Posterior vena cava (tissue), 2 donors: ENCODE measurements at regions of chr19 and their contacts with region 1.

Region 1: DNA sequence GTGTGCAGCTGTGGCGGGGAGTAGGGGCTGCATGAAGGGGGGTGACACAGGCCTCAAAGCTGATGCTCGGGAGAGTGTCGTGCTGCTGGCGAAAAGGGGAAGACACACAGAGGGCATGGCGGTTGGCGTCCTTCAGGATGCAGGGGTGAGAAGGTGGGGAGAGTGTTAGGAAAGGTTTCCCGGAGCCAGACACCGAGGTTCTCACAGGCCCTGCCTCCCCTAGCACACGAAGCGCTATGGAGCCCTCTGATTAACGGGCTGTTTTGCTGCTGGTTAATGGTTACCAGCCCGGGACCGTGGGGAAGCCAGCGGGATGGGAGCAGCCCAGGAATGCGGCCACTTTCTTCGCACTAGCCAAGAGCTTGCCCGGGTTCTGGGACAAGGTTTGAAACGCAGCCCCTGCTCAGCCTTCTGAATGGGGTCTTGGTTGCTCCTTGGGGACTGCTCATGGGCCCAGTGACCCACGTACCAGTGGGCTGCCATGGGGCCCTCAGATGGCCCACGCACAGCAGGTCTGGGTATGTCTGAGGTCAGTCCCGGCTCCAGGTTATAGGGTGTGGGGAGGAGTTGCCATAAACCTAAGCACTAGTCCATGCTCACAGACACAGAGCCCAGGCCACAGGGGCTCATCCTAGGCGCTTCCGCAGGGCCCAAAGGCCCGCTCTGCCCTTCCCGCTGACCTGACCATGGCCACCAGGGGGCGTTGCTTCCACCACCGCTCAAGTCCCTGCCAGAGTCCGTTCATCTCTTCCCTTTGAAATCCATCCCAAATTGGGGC is 31.3 kb upstream of the ISYNA1 start:
- DNase-seq: peak; percentile 92

Region 2: GRCh38 chr19:18507021-18507726 is 37.9 kb after region 1 on chr19:
- intact Hi-C with region 1: loop called in 1 of 2 experiments (anchors 5 kb)
- DNase-seq: no peak

Region 3: GRCh38 chr19:18519962-18520847 is 50.9 kb after region 1 on chr19:
- intact Hi-C with region 1: loop called in 1 of 2 experiments (anchors 5 kb)
- DNase-seq: no peak

Region 4: DNA sequence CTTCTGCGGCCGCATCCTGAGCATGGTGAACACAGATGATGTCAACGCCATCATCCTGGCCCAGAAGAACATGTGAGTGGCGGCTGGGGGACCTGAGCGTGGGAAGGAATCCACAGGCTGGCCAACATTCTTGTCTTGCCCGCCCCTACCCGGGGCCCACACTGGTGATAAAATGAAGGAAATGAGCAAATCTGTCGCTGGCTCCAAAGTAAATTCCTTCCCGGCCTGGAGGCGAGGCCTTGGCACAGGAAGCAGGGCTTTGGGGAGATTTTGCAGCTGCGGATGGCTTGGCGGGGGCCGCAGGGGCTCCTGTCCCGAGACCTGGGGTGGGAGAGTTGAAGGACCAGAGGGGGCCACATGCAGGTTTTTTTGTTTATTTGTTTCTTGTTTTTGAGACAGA is 92.8 kb after region 1 on chr19:
- intact Hi-C with region 1: loop called (anchors 5 to 10 kb)
- DNase-seq: peak; percentile 89